ENCODE measurements at regions of chr2 and their contacts with region 1.

Region 1: GRCh38 chr2:164560181-164560792 is 61.0 kb downstream of the GRB14 start:
- DNase-seq: peak; percentile 30
- H3K4me3 Mint-ChIP-seq: no peak overlapping the region
- H3K27ac Mint-ChIP-seq: no peak overlapping the region
- H3K4me1 Mint-ChIP-seq: no peaks in the 10 kb centered on the region
- H3K27me3 Mint-ChIP-seq: no peaks in the 10 kb centered on the region
- CTCF ChIP-seq: peak; percentile 70

Region 2: GRCh38 chr2:164538240-164538866 is 21.9 kb before region 1 on chr2:
- CTCF ChIA-PET with region 1: interaction called, 50 read pairs
- POLR2A ChIA-PET with region 1: interaction called, 4 read pairs
- intact Hi-C with region 1: no loop called
- DNase-seq: peak; percentile 62
- H3K4me3 Mint-ChIP-seq: no peak overlapping the region
- H3K27ac Mint-ChIP-seq: no peak overlapping the region
- H3K4me1 Mint-ChIP-seq: peaks cover 12% of the 10 kb centered on the region
- H3K27me3 Mint-ChIP-seq: no peaks in the 10 kb centered on the region
- CTCF ChIP-seq: peak; percentile 82

Region 3: DNA sequence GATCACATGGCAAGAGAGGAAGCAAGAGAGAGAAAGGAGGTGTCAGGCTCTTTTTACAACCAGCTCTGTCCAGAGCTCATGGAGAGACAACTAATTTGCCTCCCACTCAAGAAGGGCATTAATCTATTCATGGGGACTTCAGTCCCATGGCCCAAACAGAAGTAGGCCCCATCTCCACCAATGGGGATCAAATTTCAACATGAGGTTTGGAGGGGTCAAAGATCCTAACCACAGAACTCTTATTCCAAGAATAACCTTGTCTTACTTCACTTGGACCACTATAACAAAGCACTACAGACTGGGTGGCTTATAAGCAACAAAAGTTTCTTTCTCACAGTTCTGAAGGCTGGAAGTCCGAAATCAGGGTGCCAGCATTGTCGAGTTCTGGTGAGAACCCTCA is 29.2 kb after region 1 on chr2:
- CTCF ChIA-PET with region 1: interaction called, 18 read pairs
- POLR2A ChIA-PET with region 1: no interaction called
- intact Hi-C with region 1: no loop called
- DNase-seq: no peak
- H3K4me3 Mint-ChIP-seq: no peak overlapping the region
- H3K27ac Mint-ChIP-seq: no peak overlapping the region
- H3K4me1 Mint-ChIP-seq: no peaks in the 10 kb centered on the region
- H3K27me3 Mint-ChIP-seq: no peaks in the 10 kb centered on the region
- CTCF ChIP-seq: no peak

Region 4: GRCh38 chr2:164655748-164656147 is 95.5 kb after region 1 on chr2:
- CTCF ChIA-PET with region 1: interaction called, 6 read pairs
- POLR2A ChIA-PET with region 1: no interaction called
- intact Hi-C with region 1: loop called (anchors 1 kb)
- DNase-seq: peak; percentile 38
- H3K4me3 Mint-ChIP-seq: no peak overlapping the region
- H3K27ac Mint-ChIP-seq: no peak overlapping the region
- H3K4me1 Mint-ChIP-seq: no peaks in the 10 kb centered on the region
- H3K27me3 Mint-ChIP-seq: no peaks in the 10 kb centered on the region
- CTCF ChIP-seq: no peak

Region 5: GRCh38 chr2:164717000-164717803 is 156.9 kb after region 1 on chr2:
- CTCF ChIA-PET with region 1: interaction called, 23 read pairs
- POLR2A ChIA-PET with region 1: interaction called, 3 read pairs
- intact Hi-C with region 1: loop called (anchors 1 kb)
- DNase-seq: peak; percentile 56
- H3K4me3 Mint-ChIP-seq: no peak overlapping the region
- H3K27ac Mint-ChIP-seq: no peak overlapping the region
- H3K4me1 Mint-ChIP-seq: peaks cover 15% of the 10 kb centered on the region
- H3K27me3 Mint-ChIP-seq: no peaks in the 10 kb centered on the region
- CTCF ChIP-seq: peak; percentile 53

Region 6: DNA sequence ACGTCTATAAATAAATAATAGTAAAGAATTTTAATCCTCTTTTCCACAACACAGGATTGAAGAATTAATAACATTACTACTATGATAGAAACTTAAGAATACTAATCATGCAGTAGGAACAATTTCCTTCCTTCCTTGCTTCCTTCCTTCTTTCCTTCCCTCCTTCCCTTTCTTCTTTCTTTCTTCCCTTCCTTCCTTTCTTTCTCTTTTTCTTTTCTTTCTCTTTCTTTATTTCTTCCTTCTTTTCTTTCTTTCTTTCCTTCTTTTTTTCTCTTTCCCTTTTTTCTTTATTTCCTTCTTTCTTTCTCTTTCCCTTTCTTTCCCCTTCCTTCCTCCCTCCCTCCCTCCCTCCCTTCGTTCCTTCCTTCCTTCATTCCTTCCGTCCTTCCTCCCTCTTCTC is 566.0 kb after region 1 on chr2:
- CTCF ChIA-PET with region 1: no interaction called
- POLR2A ChIA-PET with region 1: no interaction called
- intact Hi-C with region 1: no loop called
- DNase-seq: no peak
- H3K4me3 Mint-ChIP-seq: no peak overlapping the region
- H3K27ac Mint-ChIP-seq: no peak overlapping the region
- H3K4me1 Mint-ChIP-seq: no peaks in the 10 kb centered on the region
- H3K27me3 Mint-ChIP-seq: peaks cover 63% of the 10 kb centered on the region
- CTCF ChIP-seq: no peak

Measured in MCF 10A (cell line).